ENCODE measurements at regions of chr2 and their contacts with region 1.

Region 1: DNA sequence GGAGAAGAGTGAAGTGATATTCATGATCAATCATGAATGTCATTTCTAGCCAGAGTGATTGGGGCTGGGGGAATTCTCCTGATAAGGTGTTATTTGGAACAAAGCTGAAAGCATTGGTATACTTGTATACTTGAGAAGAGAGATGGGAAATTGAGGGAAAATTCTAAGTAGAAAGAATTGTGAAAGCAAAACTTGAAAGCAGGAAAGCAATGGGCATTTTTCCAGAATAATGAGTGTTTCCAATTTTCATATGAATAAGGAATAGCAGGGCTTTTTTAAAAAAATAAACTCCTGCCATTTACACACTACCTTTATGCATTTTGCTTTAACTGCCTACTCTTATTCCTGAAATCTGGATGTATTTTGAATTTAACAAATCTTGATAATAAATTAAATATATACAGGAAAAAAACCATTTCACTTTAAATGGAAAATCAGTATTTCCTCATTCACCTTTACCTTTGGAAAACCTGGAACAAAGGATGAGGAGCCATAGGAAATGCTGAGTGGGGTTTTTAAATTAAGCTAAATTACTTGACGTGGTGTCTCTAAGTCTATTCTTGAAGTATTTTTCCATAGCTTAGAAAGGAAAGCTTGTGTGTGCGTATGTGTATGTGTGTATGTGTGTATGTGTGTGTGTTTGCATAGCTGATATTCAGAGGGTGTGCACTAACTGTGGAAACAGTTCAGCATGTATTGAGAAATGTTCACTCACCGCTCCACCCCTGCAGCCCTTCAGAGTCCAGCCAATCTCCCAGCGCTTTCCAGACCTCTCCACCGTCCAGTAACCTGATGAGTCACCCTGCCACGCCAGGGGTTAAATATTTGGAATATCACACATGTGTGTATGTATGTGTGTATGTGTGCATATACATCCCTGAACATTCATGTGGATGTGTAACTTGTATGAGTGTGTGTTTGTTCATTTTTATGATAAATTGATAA is 427.3 kb downstream of the THSD7B start:
- DNase-seq: no peak
- ATAC-seq: no peak
- H3K4me3 ChIP-seq: no peak overlapping the region
- H3K4me3 Mint-ChIP-seq: no peak overlapping the region
- H3K27ac ChIP-seq: no peak overlapping the region
- H3K27ac Mint-ChIP-seq: no peak overlapping the region
- H3K4me1 ChIP-seq: no peaks in the 10 kb centered on the region
- H3K4me1 Mint-ChIP-seq: no peaks in the 10 kb centered on the region
- H3K27me3 ChIP-seq: no peaks in the 10 kb centered on the region
- H3K27me3 Mint-ChIP-seq: no peaks in the 10 kb centered on the region

Region 2: DNA sequence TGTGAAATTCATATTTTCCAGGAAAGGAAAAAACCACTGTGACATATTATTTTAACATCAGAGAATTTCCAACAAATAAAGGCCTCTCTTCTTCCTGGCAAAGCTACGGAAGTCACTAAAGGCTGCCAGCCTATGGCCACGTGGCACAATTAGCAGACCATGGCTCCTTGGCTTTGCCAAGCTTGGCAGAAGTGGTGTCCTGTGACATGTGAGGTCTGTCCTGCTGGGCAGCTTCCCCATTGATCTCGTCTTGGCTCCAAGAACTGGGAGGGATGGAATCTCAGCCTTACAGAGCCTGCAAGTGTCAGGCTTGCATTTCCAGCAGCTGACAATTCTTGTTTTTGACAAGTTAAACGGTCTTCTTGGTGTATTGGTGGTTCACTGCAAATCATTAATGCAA is 654.1 kb before region 1 on chr2:
- CTCF ChIA-PET with region 1: interaction called in 1 of 2 experiments, 10 read pairs
- POLR2A ChIA-PET with region 1: no interaction called
- DNase-seq: no peak
- ATAC-seq: no peak
- H3K4me3 ChIP-seq: no peak overlapping the region
- H3K4me3 Mint-ChIP-seq: no peak overlapping the region
- H3K27ac ChIP-seq: no peak overlapping the region
- H3K27ac Mint-ChIP-seq: no peak overlapping the region
- H3K4me1 ChIP-seq: no peaks in the 10 kb centered on the region
- H3K4me1 Mint-ChIP-seq: no peaks in the 10 kb centered on the region
- H3K27me3 ChIP-seq: peaks cover 0 to 3% of the 10 kb centered on the region in 2 experiments
- H3K27me3 Mint-ChIP-seq: peaks cover 13 to 22% of the 10 kb centered on the region in 2 donors

Region 3: DNA sequence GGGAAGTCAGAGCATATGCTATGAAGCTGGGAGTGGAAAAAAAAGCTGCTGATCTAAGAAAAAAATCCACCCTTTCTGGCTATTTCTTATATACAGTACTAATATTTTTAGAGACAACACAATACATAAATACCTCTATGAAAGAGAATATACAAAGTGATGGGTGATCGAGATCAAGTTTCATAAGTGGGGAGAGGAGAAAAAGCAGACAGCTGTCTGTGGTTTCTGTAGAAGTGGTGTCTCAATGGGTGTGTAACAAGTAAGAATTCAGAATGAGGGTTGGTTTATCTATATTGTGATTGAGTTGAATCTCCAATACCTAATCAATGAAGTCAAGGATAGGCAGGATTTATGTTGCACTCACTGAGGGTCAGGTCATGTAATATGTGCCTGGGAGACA is 962.7 kb after region 1 on chr2:
- CTCF ChIA-PET with region 1: no interaction called
- POLR2A ChIA-PET with region 1: no interaction called
- DNase-seq: no peak
- ATAC-seq: no peak
- H3K4me3 ChIP-seq: no peak overlapping the region
- H3K4me3 Mint-ChIP-seq: no peak overlapping the region
- H3K27ac ChIP-seq: no peak overlapping the region
- H3K27ac Mint-ChIP-seq: no peak overlapping the region
- H3K4me1 ChIP-seq: no peaks in the 10 kb centered on the region
- H3K4me1 Mint-ChIP-seq: no peaks in the 10 kb centered on the region
- H3K27me3 ChIP-seq: no peaks in the 10 kb centered on the region
- H3K27me3 Mint-ChIP-seq: no peaks in the 10 kb centered on the region